ENCODE measurements at regions of chr12 and their contacts with region 1.

Region 1: GRCh38 chr12:47904713-47905310 is at the start of gene VDR:
- DNase-seq: peak; percentile 74 to 77
- H3K4me3 ChIP-seq: peak within 1 kb of the TSS; percentile 81
- H3K27ac ChIP-seq: peak within 1 kb of the TSS; percentile 66
- H3K4me1 ChIP-seq: peaks cover 48% of the 10 kb centered on the region
- H3K27me3 ChIP-seq: no peaks in the 10 kb centered on the region
- CTCF ChIP-seq: no peak
- total RNA-seq, gene VDR: 7.5 and 12.3 TPM in 2 replicates

Region 2: DNA sequence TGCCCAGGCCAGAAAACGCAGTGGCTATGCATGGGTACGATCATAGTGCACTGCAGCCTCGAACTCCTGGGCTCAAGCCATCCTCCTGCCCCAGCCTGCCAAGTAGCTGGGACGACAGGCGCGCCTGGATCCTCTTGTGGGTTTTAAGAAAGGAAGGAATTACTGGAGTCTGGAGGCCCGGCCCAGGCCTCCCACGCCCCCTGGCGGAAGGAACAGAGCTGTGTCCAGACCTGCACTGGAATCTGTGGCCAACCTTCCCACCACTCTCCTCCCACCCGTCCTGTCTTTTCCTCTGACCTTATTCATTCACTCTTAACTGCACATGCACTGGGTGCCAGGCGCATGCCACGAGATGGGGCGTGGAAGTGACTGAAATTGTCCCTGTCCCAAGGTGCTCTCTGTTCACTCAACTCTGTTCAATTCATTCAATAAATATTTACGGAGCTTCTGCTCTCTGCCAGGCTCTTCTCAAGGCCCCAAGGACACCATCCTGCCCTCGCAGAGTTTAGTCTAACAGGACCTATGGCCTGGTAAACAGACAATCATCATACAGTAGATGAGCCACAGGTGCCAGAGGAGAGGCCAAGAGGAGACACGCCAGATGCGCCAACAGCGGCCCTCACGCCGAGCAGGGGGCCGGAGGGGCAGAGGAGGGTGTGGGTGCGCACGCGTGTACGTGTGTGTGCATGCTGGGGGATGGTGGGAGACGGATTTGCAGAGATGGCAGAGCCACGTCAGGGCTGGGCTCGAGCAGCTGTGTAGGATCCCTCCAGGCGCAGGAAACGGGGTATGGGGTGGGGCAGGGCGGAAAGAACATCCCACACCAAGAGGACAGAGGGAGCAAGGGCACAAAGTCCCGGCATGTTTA is 44.9 kb after region 1 on chr12:
- CTCF ChIA-PET with region 1: interaction called, 16 read pairs
- POLR2A ChIA-PET with region 1: interaction called, 6 read pairs
- intact Hi-C with region 1: loop called (anchors 1 kb)
- DNase-seq: peak; percentile 66 to 79
- H3K4me3 ChIP-seq: no peak overlapping the region
- H3K27ac ChIP-seq: no peak overlapping the region
- H3K4me1 ChIP-seq: peaks cover 51% of the 10 kb centered on the region
- H3K27me3 ChIP-seq: no peaks in the 10 kb centered on the region
- CTCF ChIP-seq: peak; percentile 93

Region 3: DNA sequence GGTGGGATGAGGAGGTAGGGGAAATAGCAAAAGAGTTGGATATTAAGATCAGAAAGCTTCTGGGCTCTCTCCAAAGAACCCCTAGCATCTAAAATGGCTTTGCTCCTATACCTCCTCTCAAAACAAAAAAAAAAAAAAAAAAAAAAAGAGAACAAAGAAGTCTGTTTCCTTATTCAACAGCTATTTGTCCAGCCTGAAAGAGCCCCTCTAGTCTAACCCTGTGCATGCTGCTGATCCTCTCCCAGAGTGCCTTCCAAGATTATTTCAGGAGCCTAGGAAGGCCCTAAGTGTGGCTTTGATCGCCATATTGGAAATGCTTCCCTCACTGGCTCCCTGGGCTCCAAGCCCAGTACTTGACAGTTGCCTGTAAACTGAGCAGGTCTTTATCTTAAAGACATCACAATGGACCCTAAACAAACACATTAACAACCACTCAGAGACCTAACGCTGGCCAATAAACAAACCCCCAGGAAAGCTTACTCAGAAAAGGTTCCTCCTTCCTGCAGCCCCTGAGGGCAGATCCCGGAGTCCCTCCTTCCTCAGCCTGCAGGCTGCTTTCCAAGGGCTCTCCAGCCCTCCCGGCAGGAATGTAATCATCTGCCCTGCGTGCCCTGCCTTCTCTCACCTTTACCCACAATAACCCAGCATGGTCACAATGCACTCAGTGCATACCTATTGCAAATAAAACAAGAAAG is 116.8 kb after region 1 on chr12:
- CTCF ChIA-PET with region 1: no interaction called
- POLR2A ChIA-PET with region 1: no interaction called
- intact Hi-C with region 1: loop called (anchors 10 kb)
- DNase-seq: peak; percentile 92 to 98
- H3K4me3 ChIP-seq: no peak overlapping the region
- H3K27ac ChIP-seq: no peak overlapping the region
- H3K4me1 ChIP-seq: peaks cover 35% of the 10 kb centered on the region
- H3K27me3 ChIP-seq: peaks cover 37% of the 10 kb centered on the region
- CTCF ChIP-seq: no peak

Region 4: GRCh38 chr12:48157018-48157888 is 252.4 kb after region 1 on chr12 and contains the start of gene ASB8:
- CTCF ChIA-PET with region 1: interaction called, 3 read pairs
- POLR2A ChIA-PET with region 1: no interaction called
- intact Hi-C with region 1: loop called (anchors 2 kb)
- DNase-seq: peak; percentile 93 to 97
- H3K4me3 ChIP-seq: peak within 1 kb of the TSS; percentile 90
- H3K27ac ChIP-seq: no peak within 1 kb of the TSS; the same call in 1 of the 2 replicates
- H3K4me1 ChIP-seq: peaks cover 7% of the 10 kb centered on the region; the same call in 1 of the 2 replicates
- H3K27me3 ChIP-seq: no peaks in the 10 kb centered on the region
- CTCF ChIP-seq: peak; percentile 52
- total RNA-seq, gene ASB8: 21.8 and 25.1 TPM in 2 replicates

Region 5: DNA sequence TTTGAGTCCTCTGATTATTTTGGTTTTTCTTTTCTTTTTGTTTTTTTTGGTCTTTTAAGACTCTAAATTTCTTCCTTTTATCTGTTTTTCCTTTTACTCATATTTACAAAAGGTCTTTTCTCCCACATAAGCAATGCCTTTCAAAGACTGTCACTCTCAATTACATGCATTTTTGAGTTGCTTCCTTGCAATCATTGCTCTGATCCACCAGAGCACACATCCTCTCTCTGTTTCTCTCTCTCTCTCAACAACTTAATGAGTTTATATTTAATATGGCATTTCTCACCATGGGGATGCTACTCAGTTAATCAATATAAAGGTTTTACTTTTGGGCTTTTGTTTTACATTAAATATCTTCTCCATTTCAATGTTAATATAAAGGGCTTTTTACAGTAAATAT is 361.0 kb after region 1 on chr12:
- CTCF ChIA-PET with region 1: no interaction called
- POLR2A ChIA-PET with region 1: no interaction called
- intact Hi-C with region 1: no loop called
- DNase-seq: no peak
- H3K4me3 ChIP-seq: no peak overlapping the region
- H3K27ac ChIP-seq: no peak overlapping the region
- H3K4me1 ChIP-seq: no peaks in the 10 kb centered on the region
- H3K27me3 ChIP-seq: no peaks in the 10 kb centered on the region
- CTCF ChIP-seq: no peak